ENCODE measurements at regions of chr6 and their contacts with region 1.

Region 1: DNA sequence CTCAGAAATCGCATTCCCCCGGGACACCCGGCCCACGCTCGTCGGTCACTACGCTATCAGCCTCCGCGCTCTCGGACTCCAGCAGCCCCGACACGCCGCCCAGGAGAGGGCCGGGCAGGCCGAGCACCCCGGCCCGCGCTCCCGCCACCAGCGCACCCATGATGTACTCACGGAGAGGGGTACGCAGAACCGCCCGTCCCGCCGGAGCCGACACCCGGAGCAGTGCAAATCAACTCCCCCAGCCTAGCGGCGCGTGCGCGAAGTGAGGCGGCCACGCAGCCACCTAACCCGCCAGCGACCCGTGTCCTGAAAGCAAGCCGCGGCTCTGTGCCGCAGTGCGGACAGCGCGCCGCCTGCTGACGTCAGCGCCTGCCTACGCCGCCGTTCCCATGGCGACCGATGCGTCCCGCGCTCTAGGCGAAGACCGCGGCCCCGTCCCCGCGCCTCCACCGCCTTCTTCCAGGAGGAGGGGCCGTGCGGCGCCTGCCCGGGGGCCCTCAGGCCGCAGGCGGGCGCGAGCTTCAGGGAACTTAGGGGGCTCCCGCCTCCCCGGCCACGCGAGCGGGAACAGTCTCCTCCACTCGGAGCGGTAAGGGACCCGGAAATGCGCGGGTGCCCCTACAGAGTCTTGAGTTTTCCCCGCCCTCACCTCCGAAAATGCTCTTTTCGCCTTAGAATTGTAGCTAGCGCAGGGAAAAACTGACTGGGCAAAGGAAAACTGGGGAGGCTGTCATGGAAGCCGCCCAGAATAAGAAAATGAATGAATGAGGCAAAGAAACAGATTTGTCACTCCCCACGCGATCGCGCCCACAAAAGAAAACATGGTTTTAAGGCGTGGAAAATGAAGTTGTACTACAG is at the start of gene AHI1:
- DNase-seq: peak; percentile 93
- H3K4me3 ChIP-seq: peak within 1 kb of the TSS; percentile 70 to 92
- H3K27ac ChIP-seq: peak within 1 kb of the TSS; percentile 98 to 100
- H3K4me1 ChIP-seq: peaks cover 9 to 11% of the 10 kb centered on the region in 2 experiments; a peak in 3 of 4 replicates
- H3K27me3 ChIP-seq: no peaks in the 10 kb centered on the region
- CTCF ChIP-seq: no peak
- EP300 ChIP-seq: no peak
- RAD21 ChIP-seq: no peak; the same call in 1 of the 2 replicates
- polyA plus RNA-seq, gene AHI1: 7.3 and 11.9 TPM in 2 replicates

Region 2: GRCh38 chr6:135423649-135424128 is 74.0 kb before region 1 on chr6:
- CTCF ChIA-PET with region 1: no interaction called
- POLR2A ChIA-PET with region 1: no interaction called
- DNase-seq: peak; percentile 18
- H3K4me3 ChIP-seq: no peak overlapping the region; a peak in 1 of 4 replicates
- H3K27ac ChIP-seq: no peak overlapping the region
- H3K4me1 ChIP-seq: no peaks in the 10 kb centered on the region
- H3K27me3 ChIP-seq: no peaks in the 10 kb centered on the region
- CTCF ChIP-seq: peak; percentile 73
- EP300 ChIP-seq: no peak
- RAD21 ChIP-seq: peak; percentile 81

Region 3: GRCh38 chr6:135475292-135475886 is 22.3 kb before region 1 on chr6:
- CTCF ChIA-PET with region 1: interaction called, 4 read pairs
- POLR2A ChIA-PET with region 1: interaction called, 10 read pairs
- DNase-seq: peak; percentile 62
- H3K4me3 ChIP-seq: no peak overlapping the region
- H3K27ac ChIP-seq: peak overlapping the region in 1 of 2 experiments; percentile 86; a peak in 2 of 4 replicates
- H3K4me1 ChIP-seq: peaks cover 0 to 8% of the 10 kb centered on the region in 2 experiments; a peak in 2 of 4 replicates
- H3K27me3 ChIP-seq: no peaks in the 10 kb centered on the region
- CTCF ChIP-seq: no peak
- EP300 ChIP-seq: peak in 1 of 2 experiments; percentile 73; a peak in 1 of 4 replicates
- RAD21 ChIP-seq: no peak